Heart right ventricle (tissue), 16 donors: ENCODE measurements at regions of chr3 and their contacts with region 1.

Region 1: DNA sequence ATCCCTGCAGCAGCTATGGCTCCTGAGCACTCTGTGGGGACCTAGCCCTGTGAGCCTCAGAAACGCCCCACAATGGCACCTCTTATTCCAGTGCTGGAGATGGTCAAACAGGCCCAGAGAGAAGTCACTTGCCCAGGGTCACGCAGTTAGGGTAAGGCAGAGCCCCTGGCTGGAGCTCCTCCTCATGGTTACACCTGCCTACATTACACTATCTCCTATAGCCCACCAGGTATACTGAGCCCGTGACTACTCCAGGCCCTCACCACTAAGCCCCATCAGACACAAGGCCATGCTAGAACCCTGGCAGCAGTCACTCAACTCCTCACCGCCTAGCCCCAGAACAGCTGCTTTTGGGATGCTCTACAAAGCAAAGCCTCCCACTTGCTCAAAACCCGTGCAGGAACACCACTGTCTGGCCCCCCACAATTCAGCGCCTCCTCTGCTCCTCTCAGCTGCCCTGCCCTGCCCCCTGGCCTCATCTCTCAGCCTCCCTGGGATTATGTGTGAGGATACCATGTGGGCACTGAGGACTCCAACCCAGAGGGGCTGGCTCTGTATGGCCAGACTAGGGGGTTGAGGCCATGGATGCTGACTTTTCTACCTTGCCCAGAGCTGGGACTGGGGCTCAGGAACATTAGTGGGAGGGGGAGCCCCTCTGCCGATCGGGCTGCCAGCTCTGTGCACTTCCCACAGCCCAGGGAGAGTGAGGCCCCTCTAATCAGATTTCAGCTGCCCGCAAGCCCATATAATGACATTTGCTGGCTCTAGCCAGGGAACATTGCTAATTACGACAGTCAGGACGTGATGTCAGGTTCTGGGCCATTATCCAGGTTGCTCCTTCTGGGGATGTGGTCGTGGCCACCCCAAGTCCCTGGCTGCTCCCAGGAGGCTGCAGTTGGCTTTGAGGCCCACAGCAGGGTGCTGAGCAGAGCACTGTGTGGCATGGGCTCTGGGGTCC is 4.0 kb downstream of the NT5DC2 start:
- DNase-seq: peak in 1 of 2 donors; percentile 84
- ATAC-seq: peak; percentile 10 to 75 (median 62)
- H3K4me3 ChIP-seq: no peak overlapping the region
- H3K27ac ChIP-seq: peak overlapping the region; percentile 70 to 91 (median 83)
- H3K4me1 ChIP-seq: peaks cover 54 to 94% (median 75%) of the 10 kb centered on the region in 9 donors
- H3K27me3 ChIP-seq: no peaks in the 10 kb centered on the region
- CTCF ChIP-seq: no peak

Region 2: DNA sequence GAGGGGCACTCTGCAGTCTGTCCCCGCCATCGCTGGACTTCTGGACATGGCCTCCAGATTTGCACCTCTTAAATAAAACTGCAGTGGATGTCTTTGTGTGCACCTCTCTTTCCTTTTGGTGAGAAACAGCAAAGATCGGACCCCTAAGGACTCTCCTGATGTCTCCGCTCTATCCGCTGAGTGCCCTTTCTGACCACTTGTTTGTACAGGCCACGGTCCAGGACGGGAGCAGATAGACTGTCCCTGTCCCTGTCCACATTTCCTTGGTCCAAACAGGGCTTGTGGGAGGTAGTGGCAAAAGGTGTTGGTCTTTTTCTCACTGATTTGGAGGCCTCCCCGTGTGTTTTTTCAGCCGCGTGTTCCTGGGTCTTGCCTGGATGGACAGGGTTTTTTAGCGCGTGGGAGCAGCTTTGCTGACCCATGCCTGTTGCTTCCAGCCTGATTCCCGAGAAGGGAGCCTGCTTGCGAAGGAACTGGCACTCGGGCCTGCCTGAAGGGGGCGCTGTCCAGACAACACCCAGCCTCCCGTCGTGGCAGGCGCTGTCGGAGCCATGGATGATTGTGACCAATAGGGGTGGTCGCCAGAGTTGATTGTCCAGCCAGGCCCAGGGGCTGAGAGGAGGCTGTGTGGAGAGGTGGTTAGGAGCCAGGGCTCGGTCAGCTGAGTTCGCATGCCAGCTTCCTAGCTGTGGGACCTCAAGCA is 47.7 kb before region 1 on chr3:
- intact Hi-C with region 1: loop called in 2 of 10 experiments (anchors 5 kb)
- DNase-seq: peak in 1 of 2 donors; percentile 29
- ATAC-seq: no peak
- H3K4me3 ChIP-seq: no peak overlapping the region
- H3K27ac ChIP-seq: no peak overlapping the region
- H3K4me1 ChIP-seq: peaks cover 14 to 44% (median 30%) of the 10 kb centered on the region in 9 donors
- H3K27me3 ChIP-seq: no peaks in the 10 kb centered on the region
- CTCF ChIP-seq: peak in 7 of 9 donors; percentile 26 to 50 (median 36)

Region 3: DNA sequence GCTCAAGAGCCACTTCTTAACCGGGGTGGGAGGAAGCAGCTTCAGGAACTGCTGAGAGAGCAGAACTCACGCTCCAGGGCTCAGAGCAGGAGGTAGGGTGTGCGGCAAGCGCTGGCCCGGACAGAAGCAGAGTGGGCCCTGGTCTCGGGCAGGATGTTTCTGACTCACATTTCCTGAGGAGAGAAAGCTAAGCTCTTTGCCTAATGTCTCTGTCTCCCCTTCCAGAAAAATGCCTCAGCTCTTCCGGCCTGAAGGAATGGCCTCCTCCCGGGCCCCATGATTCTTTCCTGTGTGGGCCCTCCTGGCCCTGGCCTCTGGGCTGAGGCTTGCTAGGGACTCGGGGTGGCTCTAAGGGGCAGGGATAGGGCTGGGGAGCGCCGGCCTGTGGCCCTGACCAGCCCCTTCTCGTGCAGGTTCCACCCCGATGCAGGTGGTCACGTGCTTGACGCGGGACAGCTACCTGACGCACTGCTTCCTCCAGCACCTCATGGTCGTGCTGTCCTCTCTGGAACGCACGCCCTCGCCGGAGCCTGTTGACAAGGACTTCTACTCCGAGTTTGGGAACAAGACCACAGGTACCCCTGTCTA is 38.6 kb before region 1 on chr3:
- intact Hi-C with region 1: loop called in 2 of 10 experiments (anchors 5 kb)
- DNase-seq: peak; percentile 50 to 56
- ATAC-seq: peak; percentile 31 to 74 (median 58)
- H3K4me3 ChIP-seq: no peak overlapping the region
- H3K27ac ChIP-seq: peak overlapping the region; percentile 35 to 90 (median 72)
- H3K4me1 ChIP-seq: peaks cover 6 to 72% (median 62%) of the 10 kb centered on the region in 9 donors
- H3K27me3 ChIP-seq: no peaks in the 10 kb centered on the region
- CTCF ChIP-seq: no peak